Mucosa of descending colon (tissue), 3 donors: ENCODE measurements at regions of chr3 and their contacts with region 1.

Region 1: GRCh38 chr3:71583566-71584449 is at the start of gene FOXP1:
- DNase-seq: peak; percentile 85 to 92 (median 86)
- ATAC-seq: peak; percentile 81
- H3K4me3 ChIP-seq: peak within 1 kb of the TSS; percentile 59
- H3K4me1 ChIP-seq: peaks cover 13% of the 10 kb centered on the region
- CTCF ChIP-seq: no peak
- total RNA-seq, gene FOXP1: 133 to 217 (median 214) TPM

Region 2: GRCh38 chr3:71050538-71051258 is 533.1 kb before region 1 on chr3:
- intact Hi-C with region 1: loop called in 1 of 2 experiments (anchors 10 kb)
- DNase-seq: no peak
- ATAC-seq: peak; percentile 21
- H3K4me3 ChIP-seq: no peak overlapping the region
- H3K4me1 ChIP-seq: peaks cover 75% of the 10 kb centered on the region
- CTCF ChIP-seq: no peak

Region 3: GRCh38 chr3:71305231-71306206 is 278.3 kb before region 1 on chr3:
- intact Hi-C with region 1: loop called in 1 of 2 experiments (anchors 10 kb)
- DNase-seq: peak in 2 of 3 donors; percentile 29 to 37
- ATAC-seq: peak; percentile 61
- H3K4me3 ChIP-seq: no peak overlapping the region
- H3K4me1 ChIP-seq: peaks cover 7% of the 10 kb centered on the region
- CTCF ChIP-seq: no peak